Naive thymus-derived CD4-positive, alpha-beta T cell (primary cell): ENCODE measurements at regions of chr21 and their contacts with region 1.

Region 1: GRCh38 chr21:42233067-42233961 is 14.4 kb downstream of the ABCG1 start:
- DNase-seq: peak; percentile 52 to 90 (median 78)
- ATAC-seq: peak; percentile 70
- H3K4me3 ChIP-seq: peak overlapping the region; percentile 59
- H3K4me3 Mint-ChIP-seq: peak overlapping the region; percentile 72 to 86 (median 78)
- H3K27ac ChIP-seq: peak overlapping the region; percentile 92
- H3K27ac Mint-ChIP-seq: peak overlapping the region; percentile 70 to 96 (median 91)
- H3K4me1 ChIP-seq: peaks cover 82 to 86% of the 10 kb centered on the region in 2 donors
- H3K4me1 Mint-ChIP-seq: peaks cover 59 to 100% (median 92%) of the 10 kb centered on the region in 7 donors
- H3K27me3 ChIP-seq: no peaks in the 10 kb centered on the region
- H3K27me3 Mint-ChIP-seq: no peaks in the 10 kb centered on the region

Region 2: DNA sequence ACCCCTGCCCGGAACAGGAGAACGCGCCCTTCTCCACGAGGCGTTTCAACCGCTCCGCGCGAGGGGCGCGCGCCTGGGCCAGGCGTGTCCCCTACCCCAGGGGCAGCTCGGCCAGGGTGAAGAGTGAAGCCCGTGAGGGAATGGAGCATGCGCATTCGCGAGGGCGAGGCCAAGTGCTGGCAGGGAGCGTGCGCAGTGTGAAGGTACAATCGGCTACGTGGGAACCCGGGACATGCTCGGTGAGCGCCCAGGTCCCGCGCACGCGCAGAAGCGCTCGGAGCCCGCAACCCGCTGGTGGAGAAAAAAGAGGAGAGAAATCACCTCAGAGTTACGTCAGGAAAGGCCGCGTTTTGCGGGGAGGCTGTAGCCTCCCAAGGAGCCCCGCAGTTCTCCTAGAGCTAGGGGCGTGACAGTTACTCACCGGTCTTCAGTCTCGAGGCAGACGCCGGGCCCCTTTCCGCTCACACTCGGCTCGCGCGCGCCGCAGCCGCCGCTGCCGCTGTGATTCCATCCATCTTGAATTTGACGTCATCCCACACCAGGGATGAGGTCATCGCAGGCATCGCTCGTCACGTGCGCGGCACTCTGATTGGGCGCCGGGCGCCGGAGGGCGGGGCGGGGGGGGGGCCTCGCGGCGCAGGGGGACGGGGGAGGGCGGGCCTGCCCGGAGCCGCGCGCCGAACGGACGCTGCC is 223.3 kb before region 1 on chr21 and contains the start of gene ZBTB21:
- CTCF ChIA-PET with region 1: no interaction called
- POLR2A ChIA-PET with region 1: no interaction called
- intact Hi-C with region 1: loop called in 1 of 2 experiments (anchors 1 kb)
- DNase-seq: peak; percentile 96 to 99 (median 98)
- ATAC-seq: peak; percentile 87
- H3K4me3 ChIP-seq: peak within 1 kb of the TSS; percentile 78
- H3K4me3 Mint-ChIP-seq: peak within 1 kb of the TSS; percentile 93 to 99 (median 96)
- H3K27ac ChIP-seq: peak within 1 kb of the TSS; percentile 92
- H3K27ac Mint-ChIP-seq: peak within 1 kb of the TSS; percentile 99 to 100 (median 99)
- H3K4me1 ChIP-seq: peaks cover 0 to 5% of the 10 kb centered on the region in 2 donors
- H3K4me1 Mint-ChIP-seq: peaks cover 7 to 48% (median 41%) of the 10 kb centered on the region in 7 donors
- H3K27me3 ChIP-seq: no peaks in the 10 kb centered on the region
- H3K27me3 Mint-ChIP-seq: peaks cover 0 to 24% (median 0%) of the 10 kb centered on the region in 5 donors
- total RNA-seq, gene ZBTB21: 16.8 to 137 (median 25.2) TPM

Region 3: DNA sequence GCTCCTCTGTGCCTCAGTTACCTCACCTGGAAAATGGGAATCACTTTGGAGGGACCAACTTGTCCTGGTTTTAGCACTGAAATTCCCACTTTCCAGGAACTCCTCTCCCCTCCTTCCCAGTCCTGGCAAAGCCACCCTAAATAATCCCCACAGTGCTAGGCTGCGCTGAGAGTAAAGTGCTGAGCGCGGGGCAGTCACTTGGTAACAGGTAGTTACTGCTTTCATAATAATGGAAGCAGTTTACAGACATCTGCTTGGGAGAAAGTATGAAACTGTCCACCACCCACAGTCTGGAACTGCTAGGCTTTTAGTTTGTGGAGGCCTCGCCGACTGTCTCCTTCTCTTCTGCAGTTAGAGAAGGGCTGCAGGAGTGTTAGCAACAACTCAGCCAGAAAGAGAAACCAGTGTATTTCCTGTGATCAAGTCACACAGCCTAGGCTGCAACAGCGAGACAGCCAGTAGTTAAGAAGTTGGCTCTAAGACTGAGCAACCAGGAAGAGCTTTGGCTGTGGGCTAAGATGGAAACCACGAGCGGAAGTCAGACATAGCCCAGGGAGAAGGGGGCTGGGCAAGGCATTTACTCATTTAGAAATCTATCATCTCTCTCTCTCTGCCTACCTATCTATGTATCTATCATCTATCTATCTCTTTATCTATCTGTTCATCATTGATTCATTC is 45.2 kb before region 1 on chr21:
- CTCF ChIA-PET with region 1: interaction called, 3 read pairs
- POLR2A ChIA-PET with region 1: interaction called, 15 read pairs
- intact Hi-C with region 1: loop called (anchors 1 kb)
- DNase-seq: peak; percentile 39 to 90 (median 86)
- ATAC-seq: peak; percentile 96
- H3K4me3 ChIP-seq: peak overlapping the region; percentile 25
- H3K4me3 Mint-ChIP-seq: peak overlapping the region; percentile 39 to 90 (median 75)
- H3K27ac ChIP-seq: peak overlapping the region; percentile 85
- H3K27ac Mint-ChIP-seq: peak overlapping the region; percentile 91 to 98 (median 95)
- H3K4me1 ChIP-seq: peaks cover 73 to 90% of the 10 kb centered on the region in 2 donors
- H3K4me1 Mint-ChIP-seq: peaks cover 34 to 83% (median 65%) of the 10 kb centered on the region in 7 donors
- H3K27me3 ChIP-seq: no peaks in the 10 kb centered on the region
- H3K27me3 Mint-ChIP-seq: peaks cover 0 to 8% (median 0%) of the 10 kb centered on the region in 5 donors

Region 4: GRCh38 chr21:42220138-42220701 is 13.1 kb before region 1 on chr21:
- CTCF ChIA-PET with region 1: interaction called, 5 read pairs
- POLR2A ChIA-PET with region 1: interaction called, 30 read pairs
- intact Hi-C with region 1: loop called (anchors 1 kb)
- DNase-seq: peak; percentile 58 to 95 (median 93)
- ATAC-seq: peak; percentile 93
- H3K4me3 ChIP-seq: peak overlapping the region; percentile 69
- H3K4me3 Mint-ChIP-seq: peak overlapping the region; percentile 85 to 99 (median 93)
- H3K27ac ChIP-seq: peak overlapping the region; percentile 81
- H3K27ac Mint-ChIP-seq: peak overlapping the region; percentile 71 to 99 (median 91)
- H3K4me1 ChIP-seq: peaks cover 5 to 13% of the 10 kb centered on the region in 2 donors
- H3K4me1 Mint-ChIP-seq: peaks cover 21 to 44% (median 36%) of the 10 kb centered on the region in 7 donors
- H3K27me3 ChIP-seq: no peaks in the 10 kb centered on the region
- H3K27me3 Mint-ChIP-seq: peaks cover 0 to 3% (median 0%) of the 10 kb centered on the region in 5 donors

Region 5: DNA sequence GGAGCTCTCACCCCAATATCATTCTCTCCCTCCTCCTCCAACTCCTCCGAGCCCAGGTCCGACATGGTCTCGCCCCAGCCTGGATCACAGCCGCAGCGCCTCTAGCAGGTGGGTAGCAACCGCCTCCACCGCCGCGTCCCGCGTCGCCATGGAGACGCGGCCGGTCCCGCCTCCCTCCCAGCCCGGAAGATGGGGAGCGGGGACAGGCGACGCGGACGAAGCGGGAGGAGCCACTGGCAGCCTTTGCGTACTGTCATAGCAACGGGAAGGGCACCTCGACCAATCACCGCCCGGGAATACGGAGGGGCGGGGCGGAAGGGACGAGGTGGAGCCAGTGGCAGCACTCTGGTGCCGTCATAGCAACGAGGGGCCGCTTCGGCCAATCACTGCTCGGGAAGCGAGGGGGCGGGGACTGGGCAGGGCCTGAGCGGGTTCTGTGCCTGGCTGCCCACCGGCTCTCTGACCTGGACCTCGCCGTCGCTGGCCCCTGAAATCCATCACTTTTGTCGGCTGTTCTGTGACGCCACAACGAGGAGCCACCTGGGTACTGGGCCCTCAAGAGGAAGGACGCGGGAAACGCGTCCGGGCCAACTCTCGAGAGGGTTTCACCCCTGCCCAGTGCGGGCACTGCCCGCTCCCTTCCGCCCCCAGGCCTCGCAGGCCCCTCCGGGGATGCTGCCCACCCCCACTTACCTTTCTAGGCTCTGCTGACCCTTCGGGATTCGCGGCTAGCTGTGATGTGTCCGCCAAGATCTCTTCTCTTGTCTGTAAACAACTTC is 263.0 kb after region 1 on chr21 and contains the start of gene RSPH1:
- CTCF ChIA-PET with region 1: no interaction called
- POLR2A ChIA-PET with region 1: no interaction called
- intact Hi-C with region 1: loop called in 1 of 2 experiments (anchors 1 kb)
- DNase-seq: peak; percentile 96 to 99 (median 99)
- ATAC-seq: peak; percentile 98
- H3K4me3 ChIP-seq: peak within 1 kb of the TSS; percentile 91
- H3K4me3 Mint-ChIP-seq: peak within 1 kb of the TSS; percentile 85 to 96 (median 92)
- H3K27ac ChIP-seq: peak within 1 kb of the TSS; percentile 93
- H3K27ac Mint-ChIP-seq: peak within 1 kb of the TSS; percentile 18 to 98 (median 92)
- H3K4me1 ChIP-seq: peaks cover 11 to 15% of the 10 kb centered on the region in 2 donors
- H3K4me1 Mint-ChIP-seq: peaks cover 11 to 30% (median 26%) of the 10 kb centered on the region in 7 donors
- H3K27me3 ChIP-seq: no peaks in the 10 kb centered on the region
- H3K27me3 Mint-ChIP-seq: peaks cover 0 to 26% (median 0%) of the 10 kb centered on the region in 5 donors
- total RNA-seq, gene RSPH1: 0.27 to 0.40 TPM in 2 of 5 experiments, not detected in the others

Region 6: DNA sequence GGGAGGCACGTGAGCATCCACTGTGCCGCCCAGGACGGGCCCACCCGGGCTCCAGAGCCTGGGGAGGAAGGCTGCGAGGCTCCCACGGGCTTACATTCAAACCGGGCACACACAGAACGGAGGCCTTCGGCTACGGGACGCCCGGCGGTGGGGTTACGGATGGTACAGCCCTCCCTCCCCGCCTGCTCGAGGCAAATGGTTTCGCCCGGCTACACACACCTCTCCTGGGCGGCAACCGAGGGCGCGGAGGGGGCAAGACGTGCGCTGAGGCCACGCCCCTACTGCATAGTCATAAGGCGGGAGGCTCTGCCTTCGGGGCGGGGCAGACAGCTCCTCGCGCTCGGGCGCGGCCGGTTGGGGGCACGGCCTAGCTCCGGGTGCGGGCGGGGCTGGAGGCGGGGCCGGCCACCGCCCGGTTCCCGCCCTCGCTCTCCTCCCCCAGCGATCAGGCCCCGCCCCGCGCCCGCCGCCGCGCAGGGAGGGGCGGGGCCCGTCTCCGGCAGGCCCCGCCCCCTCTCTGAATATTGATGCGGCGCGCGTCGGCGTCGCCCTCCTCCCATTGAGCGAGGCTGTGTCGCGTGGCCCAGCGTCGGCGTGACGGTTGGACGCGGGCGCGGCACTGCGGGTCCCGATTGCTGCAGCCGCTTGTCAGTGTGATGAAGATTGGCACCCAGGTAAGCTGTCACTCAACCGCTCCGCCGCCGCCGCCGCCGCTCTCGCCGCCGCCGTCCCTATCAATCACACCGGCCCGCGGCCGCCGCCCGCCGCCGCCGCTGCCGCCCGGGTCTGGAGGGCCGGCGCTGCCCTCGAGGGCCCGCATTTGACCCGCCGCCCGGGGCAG is 740.9 kb after region 1 on chr21 and contains the start of gene PKNOX1:
- CTCF ChIA-PET with region 1: no interaction called
- POLR2A ChIA-PET with region 1: no interaction called
- intact Hi-C with region 1: loop called in 1 of 2 experiments (anchors 10 kb)
- DNase-seq: peak; percentile 98 to 100 (median 99)
- ATAC-seq: peak; percentile 91
- H3K4me3 ChIP-seq: peak within 1 kb of the TSS; percentile 85
- H3K4me3 Mint-ChIP-seq: peak within 1 kb of the TSS; percentile 78 to 93 (median 88)
- H3K27ac ChIP-seq: peak within 1 kb of the TSS; percentile 94
- H3K27ac Mint-ChIP-seq: peak within 1 kb of the TSS; percentile 78 to 95 (median 93)
- H3K4me1 ChIP-seq: peaks cover 7 to 11% of the 10 kb centered on the region in 2 donors
- H3K4me1 Mint-ChIP-seq: peaks cover 0 to 36% (median 29%) of the 10 kb centered on the region in 7 donors
- H3K27me3 ChIP-seq: no peaks in the 10 kb centered on the region
- H3K27me3 Mint-ChIP-seq: no peaks in the 10 kb centered on the region
- total RNA-seq, gene PKNOX1: 14.7 to 24.7 (median 20.8) TPM